ENCODE measurements at regions of chr11 and their contacts with region 1.

Region 1: GRCh38 chr11:47373876-47374720 is 4.2 kb downstream of the SPI1 start:
- DNase-seq: no peak
- H3K4me3 ChIP-seq: no peak overlapping the region
- H3K27ac ChIP-seq: no peak overlapping the region
- H3K4me1 ChIP-seq: no peaks in the 10 kb centered on the region
- H3K27me3 ChIP-seq: no peaks in the 10 kb centered on the region
- CTCF ChIP-seq: peak; percentile 61 to 95 (median 91)
- POLR2A ChIP-seq: no peak

Region 2: GRCh38 chr11:47454180-47454644 is 80.1 kb after region 1 on chr11:
- intact Hi-C with region 1: loop called (anchors 5 kb)
- DNase-seq: no peak
- H3K4me3 ChIP-seq: no peak overlapping the region
- H3K27ac ChIP-seq: no peak overlapping the region
- H3K4me1 ChIP-seq: no peaks in the 10 kb centered on the region
- H3K27me3 ChIP-seq: no peaks in the 10 kb centered on the region
- CTCF ChIP-seq: peak in 2 of 3 experiments; percentile 22 to 66
- POLR2A ChIP-seq: no peak

Region 3: DNA sequence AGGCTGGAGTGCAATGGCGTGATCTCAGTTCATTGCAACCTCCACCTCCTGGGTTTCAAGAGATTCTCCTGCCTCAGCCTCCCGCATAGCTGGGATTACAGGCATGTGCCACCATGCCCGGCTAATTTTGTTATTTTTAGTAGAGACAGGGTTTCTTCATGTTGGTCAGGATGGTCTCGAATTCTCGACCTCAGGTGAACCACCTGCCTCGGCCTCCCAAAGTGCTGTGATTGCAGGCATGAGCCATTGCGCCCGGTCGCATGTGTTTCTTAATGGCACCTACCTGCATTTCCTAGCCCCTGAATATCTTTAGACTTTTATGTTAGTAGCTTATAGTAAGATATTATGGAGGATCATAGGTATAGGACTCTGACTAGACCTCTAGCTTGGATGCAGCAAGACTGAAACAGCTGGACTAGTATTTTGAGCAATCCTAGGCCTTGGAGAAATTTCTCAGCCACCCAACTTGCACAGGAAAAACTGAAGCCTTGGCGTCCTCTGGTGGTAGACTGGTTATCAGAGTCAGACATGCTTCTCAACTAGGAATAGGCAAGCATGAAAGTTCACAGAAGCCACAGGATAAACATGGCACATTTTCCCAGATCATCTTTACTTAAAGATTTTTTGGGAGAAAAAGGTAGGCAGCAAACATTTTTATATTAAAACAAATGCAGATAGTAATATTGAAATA is 242.8 kb after region 1 on chr11:
- intact Hi-C with region 1: loop called (anchors 10 kb)
- DNase-seq: no peak
- H3K4me3 ChIP-seq: no peak overlapping the region
- H3K27ac ChIP-seq: no peak overlapping the region
- H3K4me1 ChIP-seq: no peaks in the 10 kb centered on the region
- H3K27me3 ChIP-seq: no peaks in the 10 kb centered on the region
- CTCF ChIP-seq: peak in 1 of 3 experiments; percentile 57
- POLR2A ChIP-seq: no peak